ENCODE measurements at regions of chr7 and their contacts with region 1.

Region 1: DNA sequence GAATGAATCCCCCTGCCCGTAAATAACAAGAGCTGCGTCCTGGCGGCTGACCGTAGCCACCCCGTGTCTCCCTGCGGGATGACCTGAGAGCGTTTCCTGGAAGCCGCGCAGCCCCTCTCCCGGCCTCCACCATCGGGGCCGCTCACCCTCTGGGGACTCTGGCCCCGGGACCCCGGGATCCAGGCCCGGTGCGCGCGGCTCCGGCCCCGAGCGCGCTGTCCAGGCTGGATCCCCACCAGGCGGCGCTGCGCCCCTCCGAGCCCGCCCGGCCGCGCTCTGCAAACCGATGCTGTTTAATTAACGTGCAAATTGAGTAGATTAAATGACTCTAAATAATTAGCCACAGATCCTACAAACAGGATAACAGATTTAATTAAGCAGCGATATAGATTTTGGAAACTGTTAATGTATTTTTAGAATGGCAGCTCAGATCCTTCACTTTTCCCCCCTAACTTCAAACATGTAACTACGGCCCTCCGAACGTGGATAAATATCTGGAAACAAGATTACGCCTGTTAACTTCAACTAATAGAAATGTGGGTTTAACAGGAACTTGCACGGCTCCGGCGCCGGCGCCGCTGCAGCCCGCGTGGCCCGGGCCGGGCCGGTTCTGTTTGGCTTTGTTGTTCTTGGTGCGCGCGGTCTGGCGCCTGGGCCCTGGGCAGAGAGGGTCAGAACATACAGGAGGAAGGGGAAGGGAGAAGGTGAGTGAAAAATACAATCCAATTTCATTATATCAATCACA is 7.1 kb upstream of the UNCX start:
- DNase-seq: peak in 1 of 2 experiments; percentile 72
- ATAC-seq: peak; percentile 54 to 87; a peak in 3 of 6 replicates
- H3K4me3 ChIP-seq: no peak overlapping the region
- H3K27ac ChIP-seq: no peak overlapping the region
- H3K4me1 ChIP-seq: 0 out of 3 replicates have a peak, but pooled peaks cover 3% of the 10 kb centered on the region
- CTCF ChIP-seq: peak; percentile 95
- EP300 ChIP-seq: no peak
- POLR2A ChIP-seq: no peak
- RAD21 ChIP-seq: peak; percentile 74 to 81

Region 2: GRCh38 chr7:1204460-1205140 is 21.0 kb before region 1 on chr7:
- CTCF ChIA-PET with region 1: interaction called, 11 read pairs
- POLR2A ChIA-PET with region 1: no interaction called
- DNase-seq: no peak
- ATAC-seq: no peak
- H3K4me3 ChIP-seq: no peak overlapping the region
- H3K27ac ChIP-seq: no peak overlapping the region
- H3K4me1 ChIP-seq: no peaks in the 10 kb centered on the region
- CTCF ChIP-seq: no peak
- EP300 ChIP-seq: no peak
- POLR2A ChIP-seq: no peak
- RAD21 ChIP-seq: no peak

Region 3: DNA sequence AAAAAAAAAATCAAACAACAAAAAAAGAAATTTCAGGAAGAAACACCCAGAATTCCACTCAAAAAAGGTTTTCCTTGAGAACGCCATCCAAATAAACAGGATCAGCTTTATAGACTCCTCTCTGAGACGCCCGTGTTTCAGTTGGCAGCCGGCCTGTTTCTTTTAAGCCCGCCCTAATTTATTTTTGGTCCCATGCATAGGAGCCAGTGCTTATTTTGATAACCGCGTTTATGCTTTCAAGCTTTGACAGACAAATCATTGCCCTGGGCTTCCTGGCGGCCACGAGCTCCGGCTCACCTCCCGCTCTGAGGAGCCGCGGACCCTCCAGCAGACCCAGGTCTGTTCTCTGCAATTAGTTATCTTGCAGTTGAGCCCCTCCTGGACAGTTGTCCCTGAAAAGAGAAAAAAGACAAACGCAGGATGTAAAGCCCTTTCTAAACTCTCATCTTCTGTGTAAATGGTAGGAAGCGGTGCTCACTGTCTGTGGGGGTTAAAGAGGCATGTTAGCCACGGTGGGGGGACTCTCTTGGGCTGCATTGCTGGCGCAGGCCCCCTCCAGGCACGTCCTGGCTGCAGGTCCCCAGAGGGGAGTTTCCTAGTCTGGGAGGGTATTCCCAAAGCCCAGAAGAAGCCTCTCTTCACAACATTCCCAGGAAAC is 15.2 kb before region 1 on chr7:
- CTCF ChIA-PET with region 1: interaction called, 22 read pairs
- POLR2A ChIA-PET with region 1: no interaction called
- DNase-seq: no peak
- ATAC-seq: no peak
- H3K4me3 ChIP-seq: no peak overlapping the region
- H3K27ac ChIP-seq: no peak overlapping the region
- H3K4me1 ChIP-seq: no peaks in the 10 kb centered on the region
- CTCF ChIP-seq: no peak
- EP300 ChIP-seq: no peak
- POLR2A ChIP-seq: no peak
- RAD21 ChIP-seq: no peak

Region 4: GRCh38 chr7:1247527-1248059 is 22.0 kb after region 1 on chr7:
- CTCF ChIA-PET with region 1: interaction called, 18 read pairs
- POLR2A ChIA-PET with region 1: no interaction called
- DNase-seq: no peak
- ATAC-seq: no peak
- H3K4me3 ChIP-seq: no peak overlapping the region
- H3K27ac ChIP-seq: no peak overlapping the region
- H3K4me1 ChIP-seq: peaks cover 12% of the 10 kb centered on the region; the same call in 1 of the 3 replicates
- CTCF ChIP-seq: no peak
- EP300 ChIP-seq: no peak
- POLR2A ChIP-seq: no peak
- RAD21 ChIP-seq: no peak

Region 5: DNA sequence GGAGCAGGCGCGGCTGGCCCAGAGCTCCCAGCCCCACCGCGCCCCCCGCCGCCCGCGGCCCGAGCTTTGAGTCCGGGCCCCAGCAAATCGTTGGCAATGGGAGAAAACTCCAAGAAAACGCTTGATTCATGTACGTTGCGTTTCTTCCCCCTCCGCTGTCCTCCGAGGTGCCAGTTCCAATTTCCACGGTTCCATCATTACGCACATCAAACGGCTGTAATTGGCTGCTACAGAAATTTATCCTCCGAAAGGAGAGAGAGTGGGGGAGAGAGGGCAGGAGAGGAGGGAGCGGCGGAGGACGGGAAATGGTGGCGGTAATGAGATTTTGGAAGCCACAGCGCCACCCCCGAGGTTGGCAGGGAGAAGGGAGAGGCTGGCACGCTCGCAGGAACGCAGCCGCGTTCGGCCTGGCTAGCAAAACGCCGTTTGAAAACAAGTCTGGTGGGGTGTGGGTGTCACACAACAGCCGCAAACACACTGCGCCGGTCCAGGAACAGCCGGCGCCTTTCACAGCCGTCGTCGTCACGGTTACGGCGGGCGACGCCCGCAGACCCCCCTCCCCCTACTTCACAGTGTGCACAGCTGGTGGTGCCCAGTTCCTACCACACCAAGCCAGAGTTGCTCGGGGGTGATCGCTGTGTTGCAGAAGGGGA is 64.5 kb after region 1 on chr7:
- CTCF ChIA-PET with region 1: interaction called, 12 read pairs
- POLR2A ChIA-PET with region 1: no interaction called
- DNase-seq: peak in 1 of 2 experiments; percentile 22
- ATAC-seq: peak in 1 of 2 experiments; percentile 12; a peak in 3 of 6 replicates
- H3K4me3 ChIP-seq: no peak overlapping the region
- H3K27ac ChIP-seq: peak overlapping the region in 1 of 2 experiments; percentile 42; a peak in 3 of 6 replicates
- H3K4me1 ChIP-seq: peaks cover 4% of the 10 kb centered on the region; the same call in 1 of the 3 replicates
- CTCF ChIP-seq: peak; percentile 12; the same call in 2 of the 3 replicates
- EP300 ChIP-seq: no peak
- POLR2A ChIP-seq: no peak
- RAD21 ChIP-seq: no peak

Region 6: GRCh38 chr7:1412322-1413261 is 187.0 kb after region 1 on chr7:
- CTCF ChIA-PET with region 1: interaction called, 218 read pairs
- POLR2A ChIA-PET with region 1: no interaction called
- DNase-seq: peak; percentile 85 to 88
- ATAC-seq: peak; percentile 63 to 91
- H3K4me3 ChIP-seq: peak overlapping the region; percentile 26; the same call in 2 of the 3 replicates
- H3K27ac ChIP-seq: 0 out of 6 replicates have a peak overlapping the region, but pooled peaks of 1 of the 2 experiments have one; percentile 34
- H3K4me1 ChIP-seq: no peaks in the 10 kb centered on the region
- CTCF ChIP-seq: peak; percentile 98
- EP300 ChIP-seq: no peak
- POLR2A ChIP-seq: no peak
- RAD21 ChIP-seq: peak; percentile 82 to 96

Region 7: GRCh38 chr7:1432411-1433082 is 206.9 kb after region 1 on chr7:
- CTCF ChIA-PET with region 1: interaction called, 46 read pairs
- POLR2A ChIA-PET with region 1: no interaction called
- DNase-seq: peak; percentile 60 to 66
- ATAC-seq: peak; percentile 61 to 84
- H3K4me3 ChIP-seq: no peak overlapping the region
- H3K27ac ChIP-seq: no peak overlapping the region
- H3K4me1 ChIP-seq: peaks cover 4% of the 10 kb centered on the region; the same call in 2 of the 3 replicates
- CTCF ChIP-seq: peak; percentile 81
- EP300 ChIP-seq: no peak
- POLR2A ChIP-seq: no peak
- RAD21 ChIP-seq: peak; percentile 68 to 76

Region 8: DNA sequence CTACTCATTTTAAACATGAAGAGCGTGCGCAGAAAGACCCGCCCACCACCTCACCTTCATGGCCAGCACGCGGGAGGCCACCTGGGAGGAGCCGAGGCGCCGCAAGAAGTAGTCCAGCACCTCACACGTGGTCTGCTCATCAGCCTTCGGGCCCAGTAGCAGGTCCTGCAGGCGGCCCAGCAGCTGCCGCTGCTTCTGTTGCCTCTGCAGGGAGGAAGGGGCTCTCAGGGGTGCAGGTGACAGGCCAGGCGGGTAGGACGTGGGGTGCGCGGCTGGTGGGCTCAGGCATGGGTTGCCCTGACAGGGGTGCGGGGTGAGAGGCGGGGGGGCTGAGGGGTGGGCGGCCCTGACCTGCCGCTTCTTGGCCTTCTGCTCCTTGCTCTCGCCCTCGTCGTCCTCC is 261.0 kb after region 1 on chr7:
- CTCF ChIA-PET with region 1: no interaction called
- POLR2A ChIA-PET with region 1: no interaction called
- DNase-seq: no peak
- ATAC-seq: no peak
- H3K4me3 ChIP-seq: no peak overlapping the region
- H3K27ac ChIP-seq: no peak overlapping the region
- H3K4me1 ChIP-seq: no peaks in the 10 kb centered on the region
- CTCF ChIP-seq: no peak
- EP300 ChIP-seq: no peak
- POLR2A ChIP-seq: no peak
- RAD21 ChIP-seq: no peak